ENCODE measurements at regions of chr9 and their contacts with region 1.

Region 1: GRCh38 chr9:89395931-89396710 is 77.8 kb downstream of the SECISBP2 start:
- DNase-seq: no peak
- ATAC-seq: no peak
- H3K4me3 ChIP-seq: no peak overlapping the region
- H3K27ac ChIP-seq: no peak overlapping the region
- H3K4me1 ChIP-seq: peaks cover 0 to 5% (median 2%) of the 10 kb centered on the region in 4 donors
- H3K27me3 ChIP-seq: no peaks in the 10 kb centered on the region
- CTCF ChIP-seq: no peak
- POLR2A ChIP-seq: no peak

Region 2: DNA sequence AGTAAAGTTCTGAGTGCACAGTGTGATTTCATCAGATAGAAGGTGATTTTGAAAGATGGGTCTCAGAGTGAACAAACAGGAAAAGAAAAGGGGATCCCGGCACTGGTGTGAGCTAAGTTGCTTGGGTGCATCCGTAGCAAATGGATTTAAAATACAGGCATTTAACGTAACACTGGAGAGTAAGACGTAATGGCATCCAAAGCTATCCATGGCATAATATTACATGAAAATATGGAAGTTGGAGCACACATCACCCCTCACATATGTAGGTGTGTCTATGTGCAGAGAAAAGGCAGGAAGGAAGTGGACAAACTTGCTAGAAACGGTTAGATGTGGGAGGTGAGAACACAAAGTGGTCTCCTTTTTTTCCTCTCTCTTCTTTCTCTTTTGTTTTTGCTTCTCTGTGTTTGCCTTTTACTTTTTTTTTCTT is 140.0 kb after region 1 on chr9:
- intact Hi-C with region 1: loop called in 1 of 2 experiments (anchors 10 kb)
- DNase-seq: no peak
- ATAC-seq: peak in 2 of 4 donors; percentile 14 to 15
- H3K4me3 ChIP-seq: no peak overlapping the region
- H3K27ac ChIP-seq: no peak overlapping the region
- H3K4me1 ChIP-seq: peaks cover 0 to 8% (median 0%) of the 10 kb centered on the region in 4 donors
- H3K27me3 ChIP-seq: no peaks in the 10 kb centered on the region
- CTCF ChIP-seq: no peak
- POLR2A ChIP-seq: no peak

Measured in right lobe of liver (tissue), 6 donors.